Astrocyte of the cerebellum (primary cell): ENCODE measurements at regions of chr20 and their contacts with region 1.

Region 1: GRCh38 chr20:36604952-36605398 is 604 bp upstream of the RAB5IF start:
- DNase-seq: no peak
- H3K4me3 ChIP-seq: peak overlapping the region; percentile 97
- CTCF ChIP-seq: no peak

Region 2: GRCh38 chr20:36550797-36551299 is 54.1 kb before region 1 on chr20:
- in situ Hi-C with region 1: loop called (anchors 5 kb)
- DNase-seq: no peak
- H3K4me3 ChIP-seq: no peak overlapping the region
- CTCF ChIP-seq: no peak